ENCODE measurements at regions of chr10 and their contacts with region 1.

Region 1: DNA sequence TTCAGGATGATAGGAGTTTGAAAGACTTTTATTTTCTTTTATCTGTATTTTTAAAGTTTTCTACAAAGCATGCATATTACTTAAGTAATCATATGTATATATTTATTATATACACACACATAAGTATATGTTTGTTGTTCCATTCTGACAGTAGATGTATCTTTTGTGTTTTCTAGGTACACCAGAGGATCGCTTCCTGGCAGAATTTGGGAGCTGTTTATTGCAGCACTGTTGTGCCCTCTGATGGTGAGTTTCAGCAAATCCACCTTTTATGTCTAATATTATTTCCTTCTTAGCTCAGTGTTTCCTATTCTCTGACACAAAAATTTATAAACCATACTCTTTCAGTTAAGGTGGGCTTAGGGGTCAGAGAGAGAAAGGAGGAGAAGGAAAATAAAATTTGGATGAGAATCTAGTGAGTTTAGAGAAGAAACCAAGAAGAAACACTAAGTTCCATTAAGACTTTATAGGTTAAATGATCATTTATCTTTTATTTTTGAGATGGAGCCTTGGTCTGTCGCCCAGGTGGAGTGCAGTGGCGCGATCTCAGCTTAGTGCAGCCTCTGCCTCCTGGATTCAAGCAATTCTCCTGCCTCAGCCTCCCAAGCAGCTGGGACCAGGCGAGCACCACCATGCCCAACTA is 59.2 kb upstream of the OIT3 start:
- DNase-seq: peak; percentile 56
- ATAC-seq: no peak
- H3K4me3 Mint-ChIP-seq: no peak overlapping the region
- H3K27ac Mint-ChIP-seq: no peak overlapping the region
- H3K4me1 Mint-ChIP-seq: no peaks in the 10 kb centered on the region
- H3K27me3 Mint-ChIP-seq: no peaks in the 10 kb centered on the region

Region 2: GRCh38 chr10:72364239-72364777 is 470.0 kb before region 1 on chr10:
- CTCF ChIA-PET with region 1: interaction called, 98 read pairs
- POLR2A ChIA-PET with region 1: interaction called, 5 read pairs
- DNase-seq: peak; percentile 92
- ATAC-seq: peak; percentile 100
- H3K4me3 Mint-ChIP-seq: no peak overlapping the region
- H3K27ac Mint-ChIP-seq: peak overlapping the region; percentile 73
- H3K4me1 Mint-ChIP-seq: peaks cover 21% of the 10 kb centered on the region
- H3K27me3 Mint-ChIP-seq: peaks cover 9% of the 10 kb centered on the region

Region 3: DNA sequence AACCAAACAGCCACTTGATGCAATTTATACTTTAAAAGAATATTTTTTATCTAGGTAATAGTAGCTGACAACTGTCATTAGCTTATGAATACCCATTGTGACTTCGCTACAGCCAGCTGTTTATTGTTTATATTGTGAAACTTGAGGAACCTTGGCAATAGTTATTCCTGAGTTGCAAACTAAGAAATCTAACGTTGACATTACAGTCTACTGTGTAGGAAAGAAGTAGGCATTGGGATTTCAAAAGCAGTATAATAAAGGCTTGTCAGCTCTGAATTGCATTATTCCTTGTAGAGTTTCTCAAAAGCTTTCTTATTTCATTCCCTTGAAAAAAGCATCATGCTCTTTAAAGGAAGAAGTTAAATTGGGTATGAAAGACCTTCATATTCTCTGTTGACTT is 16.6 kb after region 1 on chr10:
- CTCF ChIA-PET with region 1: interaction called, 10 read pairs
- POLR2A ChIA-PET with region 1: no interaction called
- DNase-seq: no peak
- ATAC-seq: no peak
- H3K4me3 Mint-ChIP-seq: no peak overlapping the region
- H3K27ac Mint-ChIP-seq: no peak overlapping the region
- H3K4me1 Mint-ChIP-seq: no peaks in the 10 kb centered on the region
- H3K27me3 Mint-ChIP-seq: no peaks in the 10 kb centered on the region